ENCODE measurements at regions of chr12 and their contacts with region 1.

Region 1: GRCh38 chr12:68331869-68332727 is at the start of gene MDM1:
- DNase-seq: peak; percentile 95
- H3K4me3 Mint-ChIP-seq: peak within 1 kb of the TSS; percentile 89
- H3K27ac Mint-ChIP-seq: peak within 1 kb of the TSS; percentile 77
- H3K4me1 Mint-ChIP-seq: peaks cover 55% of the 10 kb centered on the region
- H3K27me3 Mint-ChIP-seq: peaks cover 2% of the 10 kb centered on the region
- total RNA-seq, gene MDM1: 26.8 and 29.9 TPM in 2 replicates

Region 2: GRCh38 chr12:68303850-68304249 is 28.2 kb before region 1 on chr12:
- intact Hi-C with region 1: loop called (anchors 1 kb)
- DNase-seq: no peak
- H3K4me3 Mint-ChIP-seq: no peak overlapping the region
- H3K27ac Mint-ChIP-seq: no peak overlapping the region
- H3K4me1 Mint-ChIP-seq: peaks cover 59% of the 10 kb centered on the region
- H3K27me3 Mint-ChIP-seq: no peaks in the 10 kb centered on the region

Region 3: DNA sequence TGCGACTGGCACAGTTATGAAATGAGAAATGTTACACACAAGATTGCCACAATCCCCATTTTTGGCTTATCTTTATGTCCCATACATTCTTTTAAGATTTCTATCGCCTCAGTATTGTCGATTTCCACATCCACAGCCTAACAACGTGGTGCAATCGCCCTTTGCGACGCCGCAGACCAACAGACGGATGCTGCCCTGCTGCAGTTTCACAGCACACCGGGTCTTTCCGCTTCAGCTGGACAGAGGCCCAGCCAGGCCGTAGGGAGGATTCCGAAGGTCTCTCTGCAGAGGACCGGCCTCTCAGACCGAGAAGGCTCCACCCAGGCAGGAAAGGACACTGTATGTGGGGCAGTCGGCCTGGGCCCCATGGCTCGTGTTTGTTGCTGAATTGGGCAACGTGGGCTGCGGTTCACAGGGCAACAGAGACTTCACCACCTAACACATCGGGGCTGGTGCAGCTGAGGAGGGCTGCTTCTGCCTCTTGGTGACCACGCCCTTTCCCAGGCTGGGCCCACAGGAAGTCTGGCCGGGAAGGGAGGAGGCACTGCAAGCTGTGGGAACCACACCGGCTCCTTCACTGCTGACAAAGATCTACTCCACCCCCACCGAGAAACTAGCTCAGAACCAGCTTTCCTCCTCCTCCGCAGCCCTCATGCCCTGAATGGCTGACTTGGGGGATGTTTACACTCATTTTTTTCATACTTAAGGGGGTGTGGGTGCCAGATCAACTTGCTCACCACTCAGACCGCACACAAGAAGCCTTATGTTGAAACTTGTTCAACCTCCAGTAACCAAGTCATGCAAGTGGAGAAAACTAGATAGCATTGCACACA is 33.0 kb after region 1 on chr12:
- intact Hi-C with region 1: loop called (anchors 1 kb)
- DNase-seq: peak; percentile 85
- H3K4me3 Mint-ChIP-seq: peak overlapping the region; percentile 77
- H3K27ac Mint-ChIP-seq: peak overlapping the region; percentile 92
- H3K4me1 Mint-ChIP-seq: peaks cover 76% of the 10 kb centered on the region
- H3K27me3 Mint-ChIP-seq: no peaks in the 10 kb centered on the region

Region 4: DNA sequence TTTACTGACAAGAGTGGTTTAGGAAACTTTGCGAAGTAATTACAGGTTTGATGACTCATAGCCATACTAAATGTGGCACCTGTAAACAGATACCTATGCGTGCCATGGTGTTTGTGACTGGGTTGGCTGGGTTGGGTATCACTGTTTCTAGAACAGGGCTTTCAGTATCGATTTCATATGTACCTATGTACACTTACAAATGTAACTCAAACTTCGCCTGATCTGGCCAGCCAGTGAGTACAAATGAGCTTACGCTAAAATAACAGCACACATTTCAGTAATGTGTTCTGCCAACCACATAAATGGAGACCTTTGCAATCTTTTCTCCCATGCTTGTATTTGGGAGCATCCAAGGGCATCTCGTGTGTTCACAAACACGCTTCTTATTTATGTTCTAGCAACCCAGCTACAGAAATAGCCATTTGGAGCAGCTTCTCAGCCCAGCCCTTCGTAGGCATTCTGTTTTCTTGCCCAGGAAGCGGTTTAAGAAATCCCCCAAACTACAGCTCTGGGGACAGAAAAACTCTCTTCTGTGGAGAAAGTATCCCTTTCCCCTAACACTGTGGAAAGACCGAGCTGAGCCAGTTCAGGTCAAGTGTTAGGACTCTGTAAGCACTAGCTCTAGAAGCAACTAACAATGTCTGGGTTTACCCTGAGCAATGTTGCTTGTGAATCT is 42.3 kb after region 1 on chr12:
- intact Hi-C with region 1: loop called (anchors 1 kb)
- DNase-seq: peak; percentile 60
- H3K4me3 Mint-ChIP-seq: peak overlapping the region; percentile 31
- H3K27ac Mint-ChIP-seq: peak overlapping the region; percentile 93
- H3K4me1 Mint-ChIP-seq: peaks cover 68% of the 10 kb centered on the region
- H3K27me3 Mint-ChIP-seq: no peaks in the 10 kb centered on the region

Region 5: GRCh38 chr12:68458866-68459265 is 126.8 kb after region 1 on chr12:
- intact Hi-C with region 1: no loop called
- DNase-seq: no peak
- H3K4me3 Mint-ChIP-seq: no peak overlapping the region
- H3K27ac Mint-ChIP-seq: no peak overlapping the region
- H3K4me1 Mint-ChIP-seq: peaks cover 42% of the 10 kb centered on the region
- H3K27me3 Mint-ChIP-seq: no peaks in the 10 kb centered on the region

Region 6: GRCh38 chr12:68538726-68539614 is 206.9 kb after region 1 on chr12:
- intact Hi-C with region 1: loop called (anchors 1 kb)
- DNase-seq: peak; percentile 54
- H3K4me3 Mint-ChIP-seq: peak overlapping the region; percentile 23
- H3K27ac Mint-ChIP-seq: peak overlapping the region; percentile 52
- H3K4me1 Mint-ChIP-seq: peaks cover 48% of the 10 kb centered on the region
- H3K27me3 Mint-ChIP-seq: peaks cover 2% of the 10 kb centered on the region

Region 7: DNA sequence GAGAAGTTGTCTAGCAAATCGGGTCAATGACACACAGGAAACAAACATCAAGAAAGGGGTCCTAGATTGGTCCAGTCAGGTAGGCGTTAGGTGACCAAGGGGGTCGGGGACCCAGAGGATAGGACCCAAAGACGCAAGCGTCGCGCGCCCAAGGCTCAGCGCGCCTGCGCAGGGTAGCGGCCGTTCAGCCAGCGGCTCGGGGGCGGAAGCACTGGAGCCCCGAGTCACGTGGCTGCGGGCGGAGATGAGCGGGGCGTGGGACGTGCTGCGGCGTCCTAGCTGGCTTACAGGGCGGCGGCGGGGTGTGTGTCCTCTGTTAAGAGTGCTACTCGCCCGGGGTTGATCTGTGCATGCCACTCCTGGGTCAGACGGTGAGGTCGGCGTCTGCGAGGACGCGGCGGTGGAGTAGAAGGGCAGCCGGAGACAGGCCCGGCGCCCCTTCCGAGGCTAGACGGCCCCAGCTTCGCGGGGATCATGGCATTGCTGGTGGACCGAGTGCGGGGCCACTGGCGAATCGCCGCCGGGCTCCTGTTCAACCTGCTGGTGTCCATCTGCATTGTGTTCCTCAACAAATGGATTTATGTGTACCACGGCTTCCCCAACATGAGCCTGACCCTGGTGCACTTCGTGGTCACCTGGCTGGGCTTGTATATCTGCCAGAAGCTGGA is 413.9 kb after region 1 on chr12 and contains the start of gene SLC35E3:
- intact Hi-C with region 1: loop called (anchors 1 kb)
- DNase-seq: peak; percentile 91
- H3K4me3 Mint-ChIP-seq: peak within 1 kb of the TSS; percentile 94
- H3K27ac Mint-ChIP-seq: peak within 1 kb of the TSS; percentile 87
- H3K4me1 Mint-ChIP-seq: peaks cover 50% of the 10 kb centered on the region
- H3K27me3 Mint-ChIP-seq: no peaks in the 10 kb centered on the region
- total RNA-seq, gene SLC35E3: 5.9 and 6.3 TPM in 2 replicates

Measured in activated T-helper 1 cell treated with anti-CD3 and anti-CD28 coated beads, Interleukin-12 subunit alpha, Interleukin-12 subunit beta, Interleukin-2, Interleukin-4 antibody, amounts not matched to agents 30 ng/mL and 10 ng/mL and 1 ng/mL, durations not matched to agents 14 hours and 24 hours and 36 hours (primary cell).